ENCODE measurements at regions of chr2 and their contacts with region 1.

Region 1: GRCh38 chr2:101770726-101771125 is 73.2 kb downstream of the MAP4K4 start:
- DNase-seq: no peak
- ATAC-seq: peak in 1 of 2 donors; percentile 60
- H3K4me3 ChIP-seq: no peak overlapping the region
- H3K27ac ChIP-seq: no peak overlapping the region
- H3K4me1 ChIP-seq: peaks cover 46 to 61% of the 10 kb centered on the region in 2 donors
- H3K27me3 ChIP-seq: no peaks in the 10 kb centered on the region
- CTCF ChIP-seq: peak in 3 of 5 experiments; percentile 23 to 39 (median 34)
- POLR2A ChIP-seq: no peak

Region 2: DNA sequence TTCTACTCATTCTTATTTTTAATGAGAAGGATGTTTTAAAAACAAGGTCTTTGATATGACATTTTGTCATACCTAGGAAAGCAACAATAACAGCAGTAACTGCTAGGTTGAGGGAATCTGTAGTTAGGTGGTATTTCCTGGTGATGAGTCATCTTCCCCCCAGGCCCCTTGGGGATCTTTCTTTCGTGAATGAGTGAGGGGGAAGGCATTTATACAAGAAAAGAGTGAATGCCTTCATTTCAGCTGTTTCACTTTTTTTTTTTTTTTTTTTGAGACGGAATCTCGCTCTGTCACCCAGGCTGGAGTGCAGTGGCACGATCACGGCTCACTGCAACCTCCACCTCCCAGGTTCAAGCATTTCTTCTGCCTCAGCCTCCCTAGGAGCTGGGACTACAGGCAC is 35.4 kb after region 1 on chr2:
- in situ Hi-C with region 1: no loop called
- intact Hi-C with region 1: loop called (anchors 5 kb)
- DNase-seq: no peak
- ATAC-seq: no peak
- H3K4me3 ChIP-seq: no peak overlapping the region
- H3K27ac ChIP-seq: peak overlapping the region; percentile 8 to 51 (median 32)
- H3K4me1 ChIP-seq: peaks cover 33 to 47% of the 10 kb centered on the region in 2 donors
- H3K27me3 ChIP-seq: no peaks in the 10 kb centered on the region
- CTCF ChIP-seq: no peak
- POLR2A ChIP-seq: no peak

Region 3: GRCh38 chr2:101921319-101921952 is 150.7 kb after region 1 on chr2:
- in situ Hi-C with region 1: no loop called
- intact Hi-C with region 1: no loop called
- DNase-seq: no peak
- ATAC-seq: no peak
- H3K4me3 ChIP-seq: no peak overlapping the region
- H3K27ac ChIP-seq: no peak overlapping the region
- H3K4me1 ChIP-seq: no peaks in the 10 kb centered on the region
- H3K27me3 ChIP-seq: no peaks in the 10 kb centered on the region
- CTCF ChIP-seq: no peak
- POLR2A ChIP-seq: no peak

Measured in gastrocnemius medialis (tissue), 4 donors.